ENCODE measurements at regions of chr2 and their contacts with region 1.

Region 1: GRCh38 chr2:68362069-68362468 is 3.0 kb upstream of the PLEK start:
- DNase-seq: peak; percentile 58
- H3K4me3 ChIP-seq: no peak overlapping the region
- H3K27ac ChIP-seq: no peak overlapping the region
- H3K4me1 ChIP-seq: no peaks in the 10 kb centered on the region
- H3K27me3 ChIP-seq: no peaks in the 10 kb centered on the region
- CTCF ChIP-seq: peak; percentile 78 to 84
- POLR2A ChIP-seq: no peak

Region 2: DNA sequence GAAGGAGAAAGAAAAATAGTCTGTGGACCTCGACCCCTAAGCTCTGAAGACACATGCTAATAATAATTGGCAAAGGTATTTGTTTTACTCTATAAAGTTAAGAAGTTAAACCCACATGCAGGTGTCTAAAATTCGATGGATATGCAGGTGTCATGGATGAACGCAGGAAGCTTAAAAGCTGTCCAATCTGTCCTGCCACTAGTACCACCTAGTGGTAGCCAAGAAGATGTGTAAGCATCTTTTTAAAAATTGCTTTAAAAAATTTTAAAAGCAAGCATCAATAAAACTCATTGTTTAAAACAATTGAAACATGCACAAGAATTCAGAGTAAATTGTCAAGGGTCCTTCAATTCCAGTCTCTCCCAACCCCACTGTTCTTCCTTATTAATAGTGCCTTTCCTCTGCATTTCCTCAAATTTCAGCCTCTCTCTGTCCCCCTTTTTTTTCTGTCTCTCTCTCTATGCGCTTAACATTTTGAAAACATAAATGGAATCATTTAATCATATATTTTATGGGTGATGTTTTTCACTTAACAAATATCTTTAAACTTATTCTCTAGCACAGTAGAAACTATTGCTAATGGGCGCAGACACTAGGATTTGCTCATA is 79.2 kb before region 1 on chr2:
- CTCF ChIA-PET with region 1: interaction called, 22 read pairs
- POLR2A ChIA-PET with region 1: no interaction called
- dilution Hi-C with region 1: no loop called
- intact Hi-C with region 1: no loop called
- DNase-seq: peak; percentile 35
- H3K4me3 ChIP-seq: no peak overlapping the region
- H3K27ac ChIP-seq: no peak overlapping the region
- H3K4me1 ChIP-seq: no peaks in the 10 kb centered on the region
- H3K27me3 ChIP-seq: no peaks in the 10 kb centered on the region
- CTCF ChIP-seq: peak; percentile 43 to 61
- POLR2A ChIP-seq: no peak

Region 3: DNA sequence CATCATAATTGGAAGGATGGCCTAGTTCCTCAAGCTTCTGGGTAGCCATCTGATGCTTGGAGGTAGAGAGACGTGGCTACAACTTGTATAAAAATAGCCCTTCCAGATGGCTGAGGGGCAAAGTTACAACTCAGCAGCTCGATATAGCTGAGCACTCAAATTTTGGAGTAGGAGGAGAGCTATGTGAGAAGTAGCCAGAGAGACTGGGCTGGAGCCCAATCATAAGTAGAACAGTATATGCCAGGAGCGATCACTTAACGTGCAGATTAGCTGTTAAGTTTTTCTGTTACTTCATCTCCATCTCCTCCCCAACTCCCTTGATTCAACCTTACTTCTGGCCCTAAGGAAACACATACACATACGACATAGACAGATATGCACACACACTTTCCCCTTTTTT is 71.2 kb before region 1 on chr2:
- CTCF ChIA-PET with region 1: interaction called, 18 read pairs
- POLR2A ChIA-PET with region 1: no interaction called
- dilution Hi-C with region 1: no loop called
- intact Hi-C with region 1: no loop called
- DNase-seq: no peak
- H3K4me3 ChIP-seq: no peak overlapping the region
- H3K27ac ChIP-seq: no peak overlapping the region
- H3K4me1 ChIP-seq: no peaks in the 10 kb centered on the region
- H3K27me3 ChIP-seq: no peaks in the 10 kb centered on the region
- CTCF ChIP-seq: no peak
- POLR2A ChIP-seq: no peak

Region 4: GRCh38 chr2:68319398-68320117 is 42.5 kb before region 1 on chr2 and contains the start of gene CNRIP1:
- CTCF ChIA-PET with region 1: interaction called, 16 read pairs
- POLR2A ChIA-PET with region 1: no interaction called
- dilution Hi-C with region 1: no loop called
- intact Hi-C with region 1: loop called (anchors 1 kb)
- DNase-seq: peak; percentile 94
- H3K4me3 ChIP-seq: peak within 1 kb of the TSS; percentile 60 to 83 (median 79)
- H3K27ac ChIP-seq: peak within 1 kb of the TSS; percentile 99
- H3K4me1 ChIP-seq: peaks cover 22% of the 10 kb centered on the region
- H3K27me3 ChIP-seq: no peaks in the 10 kb centered on the region
- CTCF ChIP-seq: no peak
- POLR2A ChIP-seq: no peak
- total RNA-seq, gene CNRIP1: 73.8 and 74.6 TPM in 2 replicates

Region 5: GRCh38 chr2:68345129-68345875 is 16.8 kb before region 1 on chr2:
- CTCF ChIA-PET with region 1: interaction called, 11 read pairs
- POLR2A ChIA-PET with region 1: no interaction called
- dilution Hi-C with region 1: no loop called
- intact Hi-C with region 1: no loop called
- DNase-seq: no peak
- H3K4me3 ChIP-seq: no peak overlapping the region
- H3K27ac ChIP-seq: no peak overlapping the region
- H3K4me1 ChIP-seq: no peaks in the 10 kb centered on the region
- H3K27me3 ChIP-seq: peaks cover 11 to 18% of the 10 kb centered on the region in 2 experiments
- CTCF ChIP-seq: no peak
- POLR2A ChIP-seq: no peak

Region 6: DNA sequence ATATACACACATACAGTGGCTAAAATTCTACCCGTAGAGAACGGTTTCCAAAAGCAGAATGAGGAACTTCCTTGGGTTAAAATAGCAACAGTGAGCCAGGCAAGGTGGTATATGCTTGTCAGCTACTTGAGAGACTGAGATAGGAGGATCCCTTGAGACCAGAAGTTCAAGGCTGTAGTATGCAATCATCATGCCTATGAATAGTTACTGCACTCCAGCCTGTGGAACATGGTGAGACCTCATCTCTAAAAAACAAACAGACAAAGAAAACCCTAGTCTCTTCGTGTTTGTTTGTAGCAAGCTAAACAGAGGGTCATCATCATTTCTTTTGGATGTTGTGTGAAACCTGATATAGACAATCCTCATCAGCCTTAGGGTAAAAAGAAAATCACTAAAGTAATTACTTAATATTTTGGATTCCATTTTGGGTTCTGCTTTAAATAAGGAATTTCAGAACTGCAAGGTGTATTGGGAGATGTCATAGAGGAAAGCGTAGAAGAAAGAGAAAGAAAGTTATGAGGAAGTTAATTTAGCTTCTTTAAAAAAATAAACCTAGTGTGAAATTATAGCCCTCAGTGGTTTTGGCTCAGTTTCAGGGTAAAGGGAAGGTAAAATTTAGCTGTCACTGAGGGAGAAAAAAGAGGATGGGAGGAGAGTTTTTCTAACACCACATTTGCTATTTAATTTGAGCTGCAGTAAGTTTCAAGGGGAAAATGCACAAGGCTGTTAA is 49.5 kb after region 1 on chr2:
- CTCF ChIA-PET with region 1: no interaction called
- POLR2A ChIA-PET with region 1: no interaction called
- dilution Hi-C with region 1: no loop called
- intact Hi-C with region 1: no loop called
- DNase-seq: no peak
- H3K4me3 ChIP-seq: no peak overlapping the region
- H3K27ac ChIP-seq: no peak overlapping the region
- H3K4me1 ChIP-seq: no peaks in the 10 kb centered on the region
- H3K27me3 ChIP-seq: no peaks in the 10 kb centered on the region
- CTCF ChIP-seq: no peak
- POLR2A ChIP-seq: no peak